ENCODE measurements at regions of chr12 and their contacts with region 1.

Region 1: DNA sequence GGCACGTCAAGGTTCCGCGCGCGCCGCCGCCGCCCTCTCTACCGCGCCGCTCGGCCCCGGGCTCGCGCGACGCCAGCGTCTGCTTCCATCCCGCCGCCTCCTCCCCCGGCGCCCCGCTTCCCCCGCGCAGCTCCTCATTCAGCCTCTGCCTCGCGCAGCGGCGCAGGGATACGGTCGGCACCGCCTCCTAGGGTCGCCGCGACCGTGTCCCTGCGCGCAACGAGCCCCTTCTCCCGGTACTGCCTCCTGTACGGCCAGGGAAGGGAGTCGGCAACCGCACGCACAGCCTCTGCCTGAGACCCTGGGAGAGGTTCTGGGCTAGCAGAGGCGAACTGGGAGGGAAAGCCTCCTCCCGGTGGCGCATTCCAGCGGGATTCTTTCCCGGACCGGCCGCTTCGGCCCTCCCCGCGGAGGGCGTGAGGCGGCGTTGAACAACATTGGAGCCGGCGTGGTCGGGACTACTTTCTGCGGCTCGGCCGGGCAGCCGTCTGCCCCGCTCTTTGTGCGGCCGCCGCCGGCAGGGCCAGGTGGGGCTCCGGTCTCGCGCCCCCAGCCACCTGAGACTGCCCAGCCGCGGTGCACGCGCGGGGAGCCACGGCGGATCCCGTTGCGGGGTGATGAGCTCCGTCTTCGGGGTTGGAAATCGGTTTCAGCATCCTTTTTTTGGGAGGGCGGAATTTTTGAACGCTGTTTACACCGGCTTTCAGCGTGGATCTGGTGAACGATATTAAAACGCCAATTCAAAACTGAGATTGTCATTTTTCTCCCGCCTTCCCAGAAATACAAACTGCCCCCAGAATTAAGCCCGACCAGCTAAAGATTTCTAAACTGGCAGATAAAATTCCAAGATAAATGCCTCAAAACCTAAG is at the start of gene LRP6:
- DNase-seq: peak; percentile 57 to 83 (median 75)
- ATAC-seq: peak; percentile 91
- H3K4me3 ChIP-seq: peak within 1 kb of the TSS; percentile 86
- H3K4me3 Mint-ChIP-seq: peak within 1 kb of the TSS; percentile 79 to 93 (median 88)
- H3K27ac ChIP-seq: peak within 1 kb of the TSS; percentile 68
- H3K27ac Mint-ChIP-seq: peak within 1 kb of the TSS; percentile 29 to 88 (median 73)
- H3K4me1 ChIP-seq: peaks cover 8 to 10% of the 10 kb centered on the region in 2 donors
- H3K4me1 Mint-ChIP-seq: peaks cover 14 to 40% (median 31%) of the 10 kb centered on the region in 7 donors
- H3K27me3 ChIP-seq: peaks cover 0 to 10% of the 10 kb centered on the region in 2 donors
- H3K27me3 Mint-ChIP-seq: peaks cover 0 to 53% (median 14%) of the 10 kb centered on the region in 5 donors
- total RNA-seq, gene LRP6: 1.6 to 12.6 (median 7.4) TPM

Region 2: DNA sequence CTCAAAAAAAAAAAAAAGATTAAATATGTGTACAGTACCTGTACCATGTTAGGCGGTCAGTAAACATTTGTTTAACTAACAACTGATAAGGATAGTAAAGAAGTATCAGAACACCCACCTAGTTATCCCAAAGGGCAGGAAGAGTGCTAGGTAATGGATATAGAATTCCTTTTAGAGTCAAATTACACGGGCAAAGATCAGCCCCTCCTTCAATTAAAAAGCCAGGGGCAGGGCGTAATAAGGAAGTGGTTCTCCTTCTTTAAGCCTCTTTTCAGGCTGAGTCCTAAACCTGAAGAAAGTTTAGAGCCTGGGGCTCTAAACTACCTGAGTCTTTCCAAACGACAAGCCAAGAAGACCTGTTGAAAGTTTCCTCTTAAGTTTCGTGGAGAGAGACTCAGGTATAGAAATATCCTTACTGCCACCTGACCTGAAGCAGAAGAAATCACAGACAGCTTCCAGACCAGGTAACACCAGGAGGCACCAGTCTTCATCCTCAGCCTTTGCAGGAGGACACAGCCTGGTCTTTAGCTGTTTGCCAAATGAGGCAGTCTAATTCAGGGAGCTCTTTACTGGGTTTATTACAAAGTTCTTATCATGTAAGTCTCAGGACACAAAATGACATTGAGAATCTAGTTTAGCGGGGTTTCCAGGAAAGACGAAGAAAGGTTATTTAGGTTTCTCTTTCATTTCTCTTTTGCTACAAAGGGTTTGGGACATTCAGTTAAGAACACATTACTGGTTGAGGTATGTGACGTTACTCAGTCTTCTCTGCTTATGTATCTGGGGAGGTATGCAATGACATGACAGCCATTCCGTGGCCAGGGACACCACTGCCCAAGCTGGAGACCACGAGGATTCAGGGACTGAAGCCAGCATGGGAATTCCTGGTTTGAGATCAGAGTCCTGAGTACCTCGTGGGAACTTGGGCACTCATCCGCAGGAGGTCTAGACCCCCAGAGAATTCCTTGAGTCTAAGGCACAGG is 196.1 kb before region 1 on chr12 and contains the start of gene BCL2L14:
- CTCF ChIA-PET with region 1: no interaction called
- POLR2A ChIA-PET with region 1: no interaction called
- intact Hi-C with region 1: loop called in 1 of 2 experiments (anchors 2 kb)
- DNase-seq: peak in 6 of 9 donors; percentile 11 to 34 (median 24)
- ATAC-seq: peak; percentile 40
- H3K4me3 ChIP-seq: peak within 1 kb of the TSS; percentile 47
- H3K4me3 Mint-ChIP-seq: peak within 1 kb of the TSS; percentile 65 to 92 (median 79)
- H3K27ac ChIP-seq: peak within 1 kb of the TSS; percentile 58
- H3K27ac Mint-ChIP-seq: peak within 1 kb of the TSS; percentile 52 to 96 (median 90)
- H3K4me1 ChIP-seq: peaks cover 0 to 5% of the 10 kb centered on the region in 2 donors
- H3K4me1 Mint-ChIP-seq: peaks cover 13 to 37% (median 24%) of the 10 kb centered on the region in 7 donors
- H3K27me3 ChIP-seq: no peaks in the 10 kb centered on the region
- H3K27me3 Mint-ChIP-seq: peaks cover 0 to 8% (median 0%) of the 10 kb centered on the region in 5 donors
- total RNA-seq, gene BCL2L14: 0.92 to 7.6 (median 1.4) TPM

Region 3: GRCh38 chr12:12294215-12295005 is 27.3 kb after region 1 on chr12:
- CTCF ChIA-PET with region 1: interaction called, 3 read pairs
- POLR2A ChIA-PET with region 1: no interaction called
- intact Hi-C with region 1: loop called in 1 of 2 experiments (anchors 2 kb)
- DNase-seq: no peak
- ATAC-seq: no peak
- H3K4me3 ChIP-seq: no peak overlapping the region
- H3K4me3 Mint-ChIP-seq: no peak overlapping the region
- H3K27ac ChIP-seq: no peak overlapping the region
- H3K27ac Mint-ChIP-seq: no peak overlapping the region
- H3K4me1 ChIP-seq: no peaks in the 10 kb centered on the region
- H3K4me1 Mint-ChIP-seq: peaks cover 0 to 15% (median 13%) of the 10 kb centered on the region in 7 donors
- H3K27me3 ChIP-seq: no peaks in the 10 kb centered on the region
- H3K27me3 Mint-ChIP-seq: peaks cover 0 to 4% (median 0%) of the 10 kb centered on the region in 5 donors

Measured in naive thymus-derived CD4-positive, alpha-beta T cell (primary cell).